Endothelial cell of umbilical vein (primary cell): ENCODE measurements at regions of chr10 and their contacts with region 1.

Region 1: DNA sequence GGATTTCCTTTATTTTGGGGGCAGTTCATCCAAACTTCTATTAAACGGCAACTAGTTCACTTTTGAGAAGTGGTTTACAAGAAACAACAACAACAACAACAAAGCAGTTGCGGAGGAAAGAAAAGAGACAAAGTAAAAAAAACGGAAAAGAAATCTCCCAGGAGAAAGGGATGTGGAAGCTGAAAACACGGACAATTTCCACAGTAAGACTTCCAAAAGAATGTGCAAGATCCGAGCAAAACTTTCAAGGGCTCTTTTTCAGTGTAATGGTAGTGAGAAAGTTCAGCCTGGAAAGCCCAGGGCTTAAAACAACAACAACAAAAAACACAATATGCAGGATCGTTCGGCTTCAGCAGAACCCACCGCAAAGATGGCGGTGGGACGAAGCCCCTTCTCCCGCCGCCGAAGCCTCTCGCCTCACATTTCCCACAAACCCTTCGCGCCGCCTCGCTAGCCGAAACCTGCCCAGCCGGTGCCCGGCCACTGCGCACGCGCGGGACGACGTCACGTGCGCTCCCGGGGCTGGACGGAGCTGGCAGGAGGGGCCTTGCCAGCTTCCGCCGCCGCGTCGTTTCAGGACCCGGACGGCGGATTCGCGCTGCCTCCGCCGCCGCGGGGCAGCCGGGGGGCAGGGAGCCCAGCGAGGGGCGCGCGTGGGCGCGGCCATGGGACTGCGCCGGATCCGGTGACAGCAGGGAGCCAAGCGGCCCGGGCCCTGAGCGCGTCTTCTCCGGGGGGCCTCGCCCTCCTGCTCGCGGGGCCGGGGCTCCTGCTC is at the start of gene TNKS2:
- DNase-seq: peak; percentile 96
- H3K4me3 ChIP-seq: peak within 1 kb of the TSS; percentile 89 to 97 (median 89)
- H3K27ac ChIP-seq: peak within 1 kb of the TSS; percentile 64
- H3K4me1 ChIP-seq: peaks cover 24% of the 10 kb centered on the region
- H3K27me3 ChIP-seq: no peaks in the 10 kb centered on the region
- CTCF ChIP-seq: no peak
- POLR2A ChIP-seq: peak; percentile 95
- total RNA-seq, gene TNKS2: 33.3 and 34.0 TPM in 2 replicates

Region 2: GRCh38 chr10:91768123-91768522 is 29.9 kb before region 1 on chr10:
- CTCF ChIA-PET with region 1: no interaction called
- POLR2A ChIA-PET with region 1: no interaction called
- dilution Hi-C with region 1: no loop called
- intact Hi-C with region 1: no loop called
- DNase-seq: no peak
- H3K4me3 ChIP-seq: no peak overlapping the region
- H3K27ac ChIP-seq: no peak overlapping the region
- H3K4me1 ChIP-seq: no peaks in the 10 kb centered on the region
- H3K27me3 ChIP-seq: peaks cover 7 to 10% of the 10 kb centered on the region in 2 experiments
- CTCF ChIP-seq: no peak
- POLR2A ChIP-seq: no peak

Region 3: DNA sequence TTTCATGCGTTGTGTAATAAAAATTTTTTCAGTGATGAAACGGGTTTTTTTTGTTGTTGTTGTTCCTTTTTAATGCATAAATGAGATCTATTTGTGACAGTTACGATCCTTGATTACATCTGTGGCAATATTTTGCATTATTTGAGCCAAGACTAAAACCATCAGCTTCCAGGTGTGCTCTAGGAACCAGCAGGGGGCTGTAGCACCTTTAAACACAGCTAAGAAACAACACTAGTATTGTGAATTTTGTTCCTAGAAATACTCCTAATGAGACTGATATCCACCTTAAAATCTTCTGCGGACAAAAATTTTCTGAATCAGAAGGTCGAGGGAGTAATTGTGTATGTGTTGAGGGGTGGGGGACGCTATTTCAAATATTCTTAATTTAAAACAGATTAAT is 58.6 kb after region 1 on chr10:
- CTCF ChIA-PET with region 1: no interaction called
- POLR2A ChIA-PET with region 1: no interaction called
- dilution Hi-C with region 1: no loop called
- intact Hi-C with region 1: no loop called
- DNase-seq: peak; percentile 37
- H3K4me3 ChIP-seq: no peak overlapping the region
- H3K27ac ChIP-seq: no peak overlapping the region
- H3K4me1 ChIP-seq: no peaks in the 10 kb centered on the region
- H3K27me3 ChIP-seq: no peaks in the 10 kb centered on the region
- CTCF ChIP-seq: peak; percentile 21 to 46
- POLR2A ChIP-seq: no peak

Region 4: GRCh38 chr10:91923371-91924211 is 125.5 kb after region 1 on chr10 and contains the start of gene BTAF1:
- CTCF ChIA-PET with region 1: interaction called, 3 read pairs
- POLR2A ChIA-PET with region 1: no interaction called
- dilution Hi-C with region 1: no loop called
- intact Hi-C with region 1: loop called (anchors 5 kb)
- DNase-seq: peak; percentile 95
- H3K4me3 ChIP-seq: peak within 1 kb of the TSS; percentile 87 to 99 (median 87)
- H3K27ac ChIP-seq: peak within 1 kb of the TSS; percentile 66
- H3K4me1 ChIP-seq: peaks cover 12% of the 10 kb centered on the region
- H3K27me3 ChIP-seq: no peaks in the 10 kb centered on the region
- CTCF ChIP-seq: no peak
- POLR2A ChIP-seq: peak; percentile 96
- total RNA-seq, gene BTAF1: 21.3 and 23.1 TPM in 2 replicates